Activated naive CD4-positive, alpha-beta T cell treated with anti-CD3 and anti-CD28 coated beads for 36 hours (primary cell): ENCODE measurements at regions of chr16 and their contacts with region 1.

Region 1: DNA sequence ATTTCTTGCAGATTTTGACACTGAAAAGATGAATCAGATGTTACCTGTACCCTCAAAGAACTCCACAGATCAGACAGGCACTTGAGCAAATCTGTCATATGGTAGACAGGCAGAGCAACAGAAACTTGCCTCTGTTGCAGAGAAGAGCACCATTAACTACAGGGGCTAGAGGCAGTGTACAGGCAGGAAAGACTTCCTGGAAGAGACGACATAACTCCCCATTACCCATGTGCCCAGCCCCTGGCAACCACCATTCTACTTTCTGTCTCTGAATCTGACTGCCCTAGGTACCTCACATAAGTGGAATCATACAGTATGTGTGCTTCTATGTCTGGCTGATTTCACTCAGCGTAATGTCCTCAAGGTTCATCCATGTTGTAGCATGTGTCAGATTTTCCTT is 15.5 kb downstream of the GFOD2 start:
- DNase-seq: peak; percentile 50
- H3K4me3 Mint-ChIP-seq: no peak overlapping the region
- H3K27ac Mint-ChIP-seq: peak overlapping the region; percentile 10
- H3K4me1 Mint-ChIP-seq: peaks cover 20% of the 10 kb centered on the region
- H3K27me3 Mint-ChIP-seq: no peaks in the 10 kb centered on the region

Region 2: GRCh38 chr16:67719048-67719777 is 15.6 kb after region 1 on chr16 and contains the start of gene GFOD2:
- CTCF ChIA-PET with region 1: interaction called, 3 read pairs
- intact Hi-C with region 1: loop called (anchors 1 kb)
- DNase-seq: peak; percentile 99
- H3K4me3 Mint-ChIP-seq: peak within 1 kb of the TSS; percentile 96
- H3K27ac Mint-ChIP-seq: peak within 1 kb of the TSS; percentile 96
- H3K4me1 Mint-ChIP-seq: peaks cover 36% of the 10 kb centered on the region
- H3K27me3 Mint-ChIP-seq: no peaks in the 10 kb centered on the region
- total RNA-seq, gene GFOD2: 7.3 to 8.2 TPM

Region 3: DNA sequence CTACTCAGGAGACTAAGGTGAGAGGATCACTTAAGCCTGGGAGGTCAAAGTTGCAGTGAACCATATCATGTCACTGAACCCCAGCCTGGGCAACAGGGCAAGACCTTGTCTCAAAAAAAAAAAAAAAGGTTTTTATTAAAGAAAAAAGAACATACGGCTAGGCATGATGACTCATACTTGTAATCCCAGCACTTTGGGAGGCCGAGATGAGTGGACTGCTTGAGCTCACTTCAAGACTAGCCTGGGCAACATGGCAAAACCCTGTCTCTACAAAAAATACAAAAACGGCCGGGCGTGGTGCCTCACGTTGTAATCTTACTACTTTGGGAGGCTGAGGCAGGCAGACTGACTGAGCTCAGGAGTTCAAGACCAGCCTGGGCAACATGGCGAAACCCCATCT is 64.3 kb after region 1 on chr16:
- CTCF ChIA-PET with region 1: no interaction called
- intact Hi-C with region 1: no loop called
- DNase-seq: no peak
- H3K4me3 Mint-ChIP-seq: no peak overlapping the region
- H3K27ac Mint-ChIP-seq: no peak overlapping the region
- H3K4me1 Mint-ChIP-seq: peaks cover 2% of the 10 kb centered on the region
- H3K27me3 Mint-ChIP-seq: no peaks in the 10 kb centered on the region